Sciatic nerve (tissue), 2 donors: ENCODE measurements at regions of chr7 and their contacts with region 1.

Region 1: DNA sequence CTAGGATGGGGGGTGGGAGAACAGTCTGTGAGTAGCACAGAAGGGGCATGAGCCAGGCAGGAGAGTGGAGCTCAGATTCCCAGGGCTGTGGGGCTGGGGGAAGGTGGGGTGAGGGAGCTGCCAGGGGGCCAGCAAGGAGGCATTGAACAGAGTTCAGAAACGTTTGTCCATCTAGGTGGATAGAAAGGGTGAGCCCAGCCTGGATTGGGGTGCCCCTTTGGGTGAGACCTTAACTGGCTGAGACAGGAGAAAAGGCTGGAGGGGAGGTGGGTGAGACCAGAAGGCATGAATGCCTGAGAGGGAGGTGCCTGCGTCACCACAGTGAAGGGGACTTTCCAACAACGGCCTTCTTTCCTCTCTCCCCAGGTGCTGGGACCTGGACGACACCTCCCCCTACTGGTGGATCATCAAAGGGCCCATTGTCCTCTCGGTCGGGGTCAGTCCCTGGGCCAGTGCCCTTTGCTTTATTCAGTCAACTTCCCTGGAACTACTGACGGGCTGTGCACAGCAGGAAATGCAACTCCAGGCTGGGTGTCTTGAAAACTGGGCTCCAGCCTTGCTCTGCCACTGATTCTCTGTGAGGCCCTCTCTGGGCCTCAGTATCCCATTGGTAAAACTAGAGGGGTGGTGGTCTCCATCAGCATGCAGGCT is 11.0 kb downstream of the GHRHR start:
- DNase-seq: no peak
- ATAC-seq: peak; percentile 54

Region 2: GRCh38 chr7:30799206-30799975 is 175.3 kb before region 1 on chr7:
- intact Hi-C with region 1: loop called (anchors 10 kb)
- DNase-seq: peak; percentile 71
- ATAC-seq: peak; percentile 60

Region 3: GRCh38 chr7:30911561-30911969 is 63.2 kb before region 1 on chr7 and contains the start of gene AQP1:
- intact Hi-C with region 1: no loop called
- DNase-seq: peak; percentile 89
- ATAC-seq: peak; percentile 77
- total RNA-seq, gene AQP1: 864 TPM